PC-9 (cell line): ENCODE measurements at regions of chr9 and their contacts with region 1.

Region 1: GRCh38 chr9:83034587-83034986 is 28.4 kb downstream of the RASEF start:
- DNase-seq: no peak
- H3K4me3 ChIP-seq: no peak overlapping the region
- H3K27ac ChIP-seq: no peak overlapping the region
- H3K4me1 ChIP-seq: peaks cover 14% of the 10 kb centered on the region; the same call in 1 of the 2 replicates
- H3K27me3 ChIP-seq: no peaks in the 10 kb centered on the region
- CTCF ChIP-seq: no peak

Region 2: GRCh38 chr9:81671880-81672280 is 1362.7 kb before region 1 on chr9:
- CTCF ChIA-PET with region 1: no interaction called
- POLR2A ChIA-PET with region 1: interaction called, 22 read pairs
- intact Hi-C with region 1: no loop called
- DNase-seq: no peak
- H3K4me3 ChIP-seq: no peak overlapping the region
- H3K27ac ChIP-seq: no peak overlapping the region
- H3K4me1 ChIP-seq: no peaks in the 10 kb centered on the region
- H3K27me3 ChIP-seq: no peaks in the 10 kb centered on the region
- CTCF ChIP-seq: no peak

Region 3: GRCh38 chr9:82805027-82805426 is 229.6 kb before region 1 on chr9:
- CTCF ChIA-PET with region 1: no interaction called
- POLR2A ChIA-PET with region 1: no interaction called
- intact Hi-C with region 1: no loop called
- DNase-seq: no peak
- H3K4me3 ChIP-seq: no peak overlapping the region
- H3K27ac ChIP-seq: no peak overlapping the region
- H3K4me1 ChIP-seq: no peaks in the 10 kb centered on the region
- H3K27me3 ChIP-seq: no peaks in the 10 kb centered on the region
- CTCF ChIP-seq: no peak